Astrocyte of the cerebellum (primary cell): ENCODE measurements at regions of chr5 and their contacts with region 1.

Region 1: GRCh38 chr5:57341380-57341979 is 141.1 kb downstream of the ACTBL2 start:
- DNase-seq: no peak
- H3K4me3 ChIP-seq: no peak overlapping the region
- CTCF ChIP-seq: no peak

Region 2: GRCh38 chr5:57298295-57298984 is 43.0 kb before region 1 on chr5:
- in situ Hi-C with region 1: loop called (anchors 5 kb)
- DNase-seq: peak; percentile 87
- H3K4me3 ChIP-seq: no peak overlapping the region
- CTCF ChIP-seq: peak; percentile 81